Left colon (tissue), 2 donors: ENCODE measurements at regions of chr22 and their contacts with region 1.

Region 1: DNA sequence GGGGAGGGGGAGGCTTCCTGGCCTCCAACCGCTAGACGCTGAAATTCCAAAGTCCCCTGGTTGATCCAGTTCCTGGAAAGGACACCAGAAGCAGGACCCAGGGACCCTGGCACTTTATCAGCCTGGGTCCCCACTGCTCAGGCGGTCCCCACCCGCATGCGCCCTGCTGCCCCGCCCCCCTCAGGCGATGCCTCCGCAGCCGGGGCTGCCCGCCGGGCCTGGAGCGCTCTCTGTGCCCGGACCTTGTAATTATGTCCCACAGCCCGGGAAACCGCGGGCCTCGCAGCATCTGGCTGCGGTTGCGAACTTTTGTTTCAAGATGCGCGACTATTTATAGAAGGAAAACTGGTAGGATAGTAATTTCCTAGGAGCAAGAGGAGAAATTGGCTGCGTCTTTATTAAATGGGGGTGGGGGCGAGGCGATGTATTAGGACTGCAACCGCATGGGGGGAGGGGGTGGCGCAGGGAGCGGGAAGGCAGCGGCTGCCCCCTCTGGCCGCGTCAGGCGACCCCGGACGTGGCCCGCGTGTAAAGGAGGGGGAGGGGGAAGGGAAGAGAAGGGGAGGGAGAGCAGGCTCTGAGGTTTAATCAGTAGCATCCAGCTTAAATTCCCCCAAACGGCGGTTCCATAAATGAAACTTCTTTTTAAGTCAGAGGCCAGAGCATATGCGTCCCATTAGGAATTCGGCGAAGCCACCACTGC is 6.1 kb downstream of the WNT7B start:
- DNase-seq: no peak
- ATAC-seq: no peak

Region 2: DNA sequence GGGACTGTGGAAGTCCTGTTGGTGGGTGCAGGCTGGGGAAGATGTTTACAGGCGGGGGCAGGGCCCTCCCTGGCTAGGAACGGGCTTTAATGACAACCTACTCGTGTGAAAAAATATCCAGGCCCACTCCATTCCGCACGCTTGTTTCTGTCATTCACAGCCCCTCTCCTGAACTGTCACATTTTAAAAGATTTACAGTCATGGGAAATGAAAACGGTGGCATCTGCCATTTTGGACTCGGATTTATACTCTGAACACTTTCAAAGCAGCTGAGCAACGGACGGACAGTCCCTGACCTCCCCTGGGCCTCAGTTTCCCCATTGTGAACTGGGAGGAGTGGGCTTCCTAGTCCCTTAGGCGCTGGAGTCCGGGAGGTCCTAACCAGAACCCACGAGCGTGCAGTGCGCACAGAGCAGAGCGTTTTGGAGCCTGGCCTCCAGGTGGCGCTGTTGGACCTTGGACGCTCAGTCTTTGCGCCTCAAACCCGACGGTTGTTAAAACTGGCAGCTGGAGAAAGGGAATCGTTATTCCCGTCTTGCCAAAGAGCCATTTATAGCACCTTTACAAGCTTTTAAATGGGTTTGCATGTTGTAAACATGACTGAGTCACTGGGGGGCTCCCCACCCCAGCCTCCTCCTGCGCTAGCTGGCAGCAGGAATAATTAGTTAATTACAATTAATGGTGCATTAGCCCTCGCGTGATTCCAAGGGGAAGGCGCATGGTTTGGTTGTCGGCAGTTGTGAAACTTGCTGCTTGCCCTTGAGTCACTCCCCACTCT is 392.9 kb before region 1 on chr22:
- intact Hi-C with region 1: loop called in 1 of 2 experiments (anchors 5 kb)
- DNase-seq: peak; percentile 77 to 88
- ATAC-seq: peak; percentile 80